Right cardiac atrium (tissue), 5 donors: ENCODE measurements at regions of chr7 and their contacts with region 1.

Region 1: GRCh38 chr7:29345600-29345999 is 151.0 kb downstream of the CHN2 start:
- DNase-seq: peak; percentile 42 to 76 (median 68)
- ATAC-seq: peak; percentile 40 to 74
- H3K4me3 ChIP-seq: no peak overlapping the region
- H3K27ac ChIP-seq: no peak overlapping the region
- H3K4me1 ChIP-seq: no peaks in the 10 kb centered on the region
- H3K27me3 ChIP-seq: no peaks in the 10 kb centered on the region

Region 2: GRCh38 chr7:29017713-29018112 is 327.9 kb before region 1 on chr7:
- intact Hi-C with region 1: no loop called
- DNase-seq: no peak
- ATAC-seq: no peak
- H3K4me3 ChIP-seq: no peak overlapping the region
- H3K27ac ChIP-seq: no peak overlapping the region
- H3K4me1 ChIP-seq: peaks cover 2% of the 10 kb centered on the region
- H3K27me3 ChIP-seq: no peaks in the 10 kb centered on the region

Region 3: GRCh38 chr7:29189743-29190201 is 155.8 kb before region 1 on chr7:
- intact Hi-C with region 1: loop called in 2 of 4 experiments (anchors 2 to 10 kb)
- DNase-seq: peak; percentile 59 to 85 (median 77)
- ATAC-seq: peak; percentile 57 to 80
- H3K4me3 ChIP-seq: no peak overlapping the region
- H3K27ac ChIP-seq: no peak overlapping the region
- H3K4me1 ChIP-seq: no peaks in the 10 kb centered on the region
- H3K27me3 ChIP-seq: no peaks in the 10 kb centered on the region

Region 4: GRCh38 chr7:29370531-29371314 is 25.1 kb after region 1 on chr7:
- intact Hi-C with region 1: no loop called
- DNase-seq: peak in 1 of 3 donors; percentile 19
- ATAC-seq: peak; percentile 64 to 88
- H3K4me3 ChIP-seq: no peak overlapping the region
- H3K27ac ChIP-seq: no peak overlapping the region
- H3K4me1 ChIP-seq: no peaks in the 10 kb centered on the region
- H3K27me3 ChIP-seq: no peaks in the 10 kb centered on the region